Caco-2 (cell line): ENCODE measurements at regions of chr9 and their contacts with region 1.

Region 1: DNA sequence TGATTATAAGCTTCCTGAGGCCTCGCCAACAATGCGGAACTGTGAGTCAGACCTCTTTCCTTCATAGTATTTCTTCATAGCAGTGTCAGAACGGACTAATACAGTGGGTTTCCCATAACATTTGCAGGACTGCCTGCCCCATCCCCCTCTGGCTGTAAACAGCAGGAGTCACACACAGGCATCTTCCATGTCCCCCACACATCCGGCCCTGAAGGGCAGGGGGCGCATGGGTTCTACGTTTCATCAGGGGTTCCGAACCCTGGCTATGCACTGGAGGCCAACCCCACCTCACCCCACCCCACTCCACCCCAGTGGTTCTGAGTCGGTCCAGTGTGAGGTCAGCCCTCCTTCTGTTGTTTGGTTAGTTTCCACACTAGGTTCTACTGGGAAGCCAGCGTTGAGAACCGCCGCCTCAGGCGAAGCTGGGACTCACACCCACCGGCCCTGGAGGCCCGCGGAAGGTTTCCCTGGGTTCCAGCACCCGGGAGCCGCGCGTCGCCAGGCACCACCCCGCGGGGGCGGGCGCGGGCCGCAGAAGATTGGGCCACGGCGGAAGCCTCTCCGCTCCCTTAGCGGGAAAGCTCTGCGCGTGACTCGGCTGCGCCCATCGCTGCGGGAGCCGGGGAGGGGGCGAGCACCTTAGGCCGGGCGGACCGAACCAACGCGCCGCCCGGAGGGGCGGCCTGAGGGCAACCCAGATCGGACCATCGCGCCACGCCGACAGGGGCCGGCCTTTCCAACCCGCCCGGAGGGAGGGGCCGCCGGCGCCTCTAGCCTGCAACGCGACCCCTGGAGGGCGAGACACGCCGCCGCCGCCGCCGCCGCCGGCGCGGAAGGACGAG is at the start of gene RUSC2:
- DNase-seq: peak; percentile 91 to 94
- H3K4me3 ChIP-seq: peak within 1 kb of the TSS; percentile 52
- H3K4me3 Mint-ChIP-seq: peak within 1 kb of the TSS; percentile 97
- H3K27ac Mint-ChIP-seq: peak within 1 kb of the TSS; percentile 93
- H3K4me1 ChIP-seq: peaks cover 18% of the 10 kb centered on the region
- H3K4me1 Mint-ChIP-seq: peaks cover 26% of the 10 kb centered on the region
- H3K27me3 ChIP-seq: no peaks in the 10 kb centered on the region
- H3K27me3 Mint-ChIP-seq: no peaks in the 10 kb centered on the region
- CTCF ChIP-seq: peak; percentile 39 to 62
- total RNA-seq, gene RUSC2: 13.0 and 13.5 TPM in 2 replicates

Region 2: DNA sequence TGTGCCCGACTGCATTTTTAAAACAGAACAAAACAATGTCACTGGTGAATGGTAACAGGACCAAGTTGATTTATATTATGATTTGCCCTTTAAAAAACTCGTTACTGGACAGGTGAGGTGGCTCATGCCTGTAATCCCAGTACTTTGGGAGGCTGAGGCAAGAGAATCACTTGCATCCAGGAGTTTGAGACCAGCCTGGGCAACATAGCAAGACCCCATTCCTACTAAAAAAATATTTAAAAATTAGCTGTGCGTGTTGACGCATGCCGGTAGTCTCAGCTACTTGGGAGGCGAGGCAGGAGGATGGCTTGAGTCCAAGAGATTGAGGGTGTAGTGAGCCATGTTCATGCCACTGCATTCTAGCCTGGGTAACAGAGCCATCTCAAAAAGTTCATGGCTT is 320.6 kb before region 1 on chr9:
- CTCF ChIA-PET with region 1: no interaction called
- POLR2A ChIA-PET with region 1: no interaction called
- intact Hi-C with region 1: no loop called
- DNase-seq: no peak
- H3K4me3 ChIP-seq: no peak overlapping the region
- H3K4me3 Mint-ChIP-seq: no peak overlapping the region
- H3K27ac Mint-ChIP-seq: no peak overlapping the region
- H3K4me1 ChIP-seq: no peaks in the 10 kb centered on the region
- H3K4me1 Mint-ChIP-seq: no peaks in the 10 kb centered on the region
- H3K27me3 ChIP-seq: no peaks in the 10 kb centered on the region
- H3K27me3 Mint-ChIP-seq: no peaks in the 10 kb centered on the region
- CTCF ChIP-seq: no peak

Region 3: GRCh38 chr9:35510745-35511428 is 21.4 kb after region 1 on chr9:
- CTCF ChIA-PET with region 1: interaction called, 12 read pairs
- POLR2A ChIA-PET with region 1: interaction called, 8 read pairs
- intact Hi-C with region 1: loop called (anchors 1 kb)
- DNase-seq: peak; percentile 79 to 83
- H3K4me3 ChIP-seq: no peak overlapping the region
- H3K4me3 Mint-ChIP-seq: peak overlapping the region; percentile 36
- H3K27ac Mint-ChIP-seq: peak overlapping the region; percentile 88
- H3K4me1 ChIP-seq: peaks cover 37% of the 10 kb centered on the region
- H3K4me1 Mint-ChIP-seq: peaks cover 28% of the 10 kb centered on the region
- H3K27me3 ChIP-seq: no peaks in the 10 kb centered on the region
- H3K27me3 Mint-ChIP-seq: no peaks in the 10 kb centered on the region
- CTCF ChIP-seq: peak in 1 of 2 experiments; percentile 57

Region 4: DNA sequence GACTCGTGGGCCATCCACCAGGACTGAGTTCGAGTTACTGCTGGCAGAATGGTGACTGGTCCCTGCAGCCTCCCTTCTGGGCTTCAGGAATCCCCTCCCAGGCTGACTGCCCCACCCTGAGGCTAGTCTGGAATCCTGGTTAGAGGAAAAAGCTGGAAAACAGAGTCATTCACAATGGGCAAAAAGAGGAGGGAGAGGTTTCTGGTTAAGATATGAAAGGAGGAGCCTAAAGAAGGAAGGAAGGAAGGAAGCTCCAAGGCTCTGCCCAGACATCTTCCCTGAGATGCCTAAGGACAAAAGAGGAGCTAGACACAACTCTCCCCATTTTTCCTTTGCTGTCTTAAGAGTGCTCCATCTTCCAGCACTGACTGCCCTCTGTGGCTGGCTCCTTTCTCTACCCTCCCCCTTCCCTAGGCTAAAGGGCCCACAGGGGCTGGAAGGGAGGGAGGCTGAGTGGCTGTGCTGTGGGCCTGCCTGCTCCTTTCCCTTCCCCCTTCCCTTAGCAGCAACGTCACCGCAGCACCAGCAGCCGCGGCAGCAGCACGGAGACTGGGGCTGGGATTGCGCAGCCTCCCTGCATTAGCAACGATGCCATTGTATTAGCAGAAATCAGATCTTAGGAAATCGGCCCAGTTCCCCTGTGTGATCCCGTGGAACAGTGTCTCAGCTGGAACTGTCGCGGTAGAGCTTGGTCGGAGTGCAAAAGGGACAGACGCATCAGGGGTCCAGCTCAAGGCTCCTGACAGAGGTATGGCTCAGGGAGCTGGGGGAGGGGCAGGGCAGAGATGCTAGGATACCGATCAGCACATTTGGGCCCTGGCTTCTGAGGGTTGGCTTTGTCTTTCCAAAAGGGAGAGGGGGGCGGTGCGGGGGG is 49.1 kb after region 1 on chr9:
- CTCF ChIA-PET with region 1: no interaction called
- POLR2A ChIA-PET with region 1: no interaction called
- intact Hi-C with region 1: loop called (anchors 1 kb)
- DNase-seq: no peak
- H3K4me3 ChIP-seq: no peak overlapping the region
- H3K4me3 Mint-ChIP-seq: no peak overlapping the region
- H3K27ac Mint-ChIP-seq: no peak overlapping the region
- H3K4me1 ChIP-seq: no peaks in the 10 kb centered on the region
- H3K4me1 Mint-ChIP-seq: no peaks in the 10 kb centered on the region
- H3K27me3 ChIP-seq: no peaks in the 10 kb centered on the region
- H3K27me3 Mint-ChIP-seq: no peaks in the 10 kb centered on the region
- CTCF ChIP-seq: no peak

Region 5: DNA sequence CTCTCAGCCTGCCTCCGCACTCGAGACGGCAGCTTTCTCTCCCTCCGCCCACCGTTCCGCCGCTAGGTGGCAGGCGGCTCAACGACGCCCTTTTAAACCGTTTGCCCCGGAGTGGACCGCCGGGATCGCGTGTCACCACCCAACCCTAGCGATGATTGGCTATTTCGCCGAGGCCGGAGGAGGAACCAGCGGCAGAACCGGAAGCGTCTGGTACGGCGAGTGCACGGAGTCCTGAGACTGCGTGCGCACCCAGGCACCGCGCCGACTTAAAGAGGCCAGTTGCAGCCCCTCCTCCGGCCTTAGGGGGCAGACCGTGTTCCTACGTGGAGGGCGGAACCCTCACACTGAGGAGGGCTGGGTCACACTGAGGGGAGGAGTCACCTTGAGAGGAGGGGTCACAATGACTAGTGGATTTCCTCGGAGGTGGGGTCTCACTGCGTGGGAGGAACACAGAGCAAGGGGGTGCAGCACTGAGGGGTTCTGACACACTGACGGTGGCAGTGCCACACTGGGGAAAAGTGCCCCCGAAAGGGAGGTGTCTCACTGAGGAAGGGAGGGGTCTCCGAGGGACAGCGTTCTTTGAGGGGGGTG is 114.5 kb after region 1 on chr9:
- CTCF ChIA-PET with region 1: interaction called, 4 read pairs
- POLR2A ChIA-PET with region 1: no interaction called
- intact Hi-C with region 1: loop called (anchors 2 kb)
- DNase-seq: peak; percentile 99 to 100
- H3K4me3 ChIP-seq: peak overlapping the region; percentile 92
- H3K4me3 Mint-ChIP-seq: peak overlapping the region; percentile 99
- H3K27ac Mint-ChIP-seq: peak overlapping the region; percentile 99
- H3K4me1 ChIP-seq: peaks cover 16% of the 10 kb centered on the region
- H3K4me1 Mint-ChIP-seq: peaks cover 23% of the 10 kb centered on the region
- H3K27me3 ChIP-seq: no peaks in the 10 kb centered on the region
- H3K27me3 Mint-ChIP-seq: no peaks in the 10 kb centered on the region
- CTCF ChIP-seq: peak; percentile 78 to 83

Region 6: GRCh38 chr9:35696525-35697215 is 207.1 kb after region 1 on chr9:
- CTCF ChIA-PET with region 1: no interaction called
- POLR2A ChIA-PET with region 1: no interaction called
- intact Hi-C with region 1: no loop called
- DNase-seq: peak; percentile 68 to 76
- H3K4me3 ChIP-seq: no peak overlapping the region
- H3K4me3 Mint-ChIP-seq: no peak overlapping the region
- H3K27ac Mint-ChIP-seq: no peak overlapping the region
- H3K4me1 ChIP-seq: peaks cover 8% of the 10 kb centered on the region
- H3K4me1 Mint-ChIP-seq: no peaks in the 10 kb centered on the region
- H3K27me3 ChIP-seq: no peaks in the 10 kb centered on the region
- H3K27me3 Mint-ChIP-seq: no peaks in the 10 kb centered on the region
- CTCF ChIP-seq: peak; percentile 70 to 90